ENCODE measurements at regions of chr6 and their contacts with region 1.

Region 1: GRCh38 chr6:106783631-106784566 is 154.5 kb downstream of the QRSL1 start:
- DNase-seq: no peak
- ATAC-seq: no peak
- H3K4me3 Mint-ChIP-seq: no peak overlapping the region
- H3K27ac Mint-ChIP-seq: no peak overlapping the region
- H3K4me1 Mint-ChIP-seq: no peaks in the 10 kb centered on the region
- H3K27me3 Mint-ChIP-seq: peaks cover 3% of the 10 kb centered on the region
- CTCF ChIP-seq: no peak

Region 2: DNA sequence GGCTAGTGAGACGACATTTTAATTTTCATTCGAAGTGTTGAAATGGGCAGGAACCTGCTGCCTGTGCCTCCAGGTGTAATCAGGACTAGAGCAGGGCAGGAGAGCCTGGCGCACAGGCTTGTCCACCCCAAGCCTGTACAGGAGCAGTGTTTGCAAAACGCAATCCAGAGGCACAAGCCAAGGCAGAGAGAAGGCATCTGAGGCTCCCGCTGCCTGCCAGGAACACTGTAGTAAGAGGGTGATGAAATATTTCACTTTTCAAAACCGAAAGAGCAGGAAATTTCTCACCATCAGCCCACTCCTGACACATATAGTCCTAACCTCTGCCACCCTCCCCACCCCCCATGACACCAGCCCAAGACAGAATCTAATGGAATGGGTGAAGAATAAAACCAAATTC is 287.1 kb before region 1 on chr6:
- CTCF ChIA-PET with region 1: no interaction called
- POLR2A ChIA-PET with region 1: no interaction called
- intact Hi-C with region 1: loop called (anchors 5 kb)
- DNase-seq: no peak
- ATAC-seq: no peak
- H3K4me3 Mint-ChIP-seq: no peak overlapping the region
- H3K27ac Mint-ChIP-seq: no peak overlapping the region
- H3K4me1 Mint-ChIP-seq: peaks cover 4% of the 10 kb centered on the region
- H3K27me3 Mint-ChIP-seq: no peaks in the 10 kb centered on the region
- CTCF ChIP-seq: no peak

Measured in activated CD8-positive, alpha-beta T cell treated with anti-CD3 and anti-CD28 coated beads for 36 hours (primary cell).